HEK293 (cell line): ENCODE measurements at regions of chr10 and their contacts with region 1.

Region 1: DNA sequence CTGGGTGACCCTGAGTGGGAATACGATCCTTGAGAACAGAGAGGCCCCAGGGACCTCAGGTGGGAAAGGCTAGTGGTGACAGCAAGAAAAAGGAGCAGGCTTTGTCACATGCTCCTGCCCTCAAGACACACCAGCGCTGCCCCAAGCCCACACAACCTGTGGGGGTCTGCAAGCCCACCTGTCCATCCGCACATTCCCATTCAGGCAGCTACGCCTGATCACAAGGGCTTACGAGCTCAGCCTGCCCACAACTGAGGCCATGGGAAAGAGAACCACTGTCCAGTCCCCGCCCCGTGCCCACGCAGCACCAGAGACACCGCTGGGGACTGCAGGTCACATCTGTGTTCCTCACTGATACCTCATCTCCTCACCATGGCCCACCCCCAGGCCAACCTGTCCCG is 26.7 kb downstream of the EBF3 start:
- H3K4me3 ChIP-seq: no peak overlapping the region
- H3K27ac ChIP-seq: no peak overlapping the region
- H3K4me1 ChIP-seq: no peaks in the 10 kb centered on the region
- CTCF ChIP-seq: no peak

Region 2: DNA sequence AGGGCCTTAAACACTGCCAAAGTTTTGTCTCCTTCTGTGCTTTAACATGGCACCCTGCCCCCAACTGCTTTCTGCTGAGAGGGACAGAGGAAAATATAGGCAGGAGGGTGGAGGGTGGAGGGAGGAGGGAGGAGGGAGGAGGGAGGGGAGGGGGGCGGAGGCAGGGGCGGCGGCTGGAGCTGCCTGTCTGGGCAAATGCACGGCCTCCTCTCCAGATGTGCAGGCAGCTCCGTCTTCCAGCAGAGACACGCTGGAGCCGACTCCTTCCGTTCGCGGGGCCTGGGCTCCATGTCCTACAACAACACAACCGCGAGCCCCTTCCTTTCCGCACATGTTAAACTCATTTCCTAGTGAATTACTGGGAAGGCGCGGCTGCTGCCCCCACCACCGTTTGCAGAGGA is 12.5 kb after region 1 on chr10:
- CTCF ChIA-PET with region 1: no interaction called
- POLR2A ChIA-PET with region 1: interaction called, 11 read pairs
- H3K4me3 ChIP-seq: no peak overlapping the region
- H3K27ac ChIP-seq: peak overlapping the region; percentile 34; the same call in 1 of the 2 replicates
- H3K4me1 ChIP-seq: peaks cover 23% of the 10 kb centered on the region
- CTCF ChIP-seq: no peak

Region 3: GRCh38 chr10:129971381-129972144 is 34.2 kb after region 1 on chr10:
- CTCF ChIA-PET with region 1: no interaction called
- POLR2A ChIA-PET with region 1: no interaction called
- H3K4me3 ChIP-seq: peak overlapping the region; percentile 38
- H3K27ac ChIP-seq: no peak overlapping the region; the same call in 1 of the 2 replicates
- H3K4me1 ChIP-seq: peaks cover 10% of the 10 kb centered on the region; the same call in 1 of the 2 replicates
- CTCF ChIP-seq: peak; percentile 77